HepG2 (cell line): ENCODE measurements at regions of chr1 and their contacts with region 1.

Region 1: DNA sequence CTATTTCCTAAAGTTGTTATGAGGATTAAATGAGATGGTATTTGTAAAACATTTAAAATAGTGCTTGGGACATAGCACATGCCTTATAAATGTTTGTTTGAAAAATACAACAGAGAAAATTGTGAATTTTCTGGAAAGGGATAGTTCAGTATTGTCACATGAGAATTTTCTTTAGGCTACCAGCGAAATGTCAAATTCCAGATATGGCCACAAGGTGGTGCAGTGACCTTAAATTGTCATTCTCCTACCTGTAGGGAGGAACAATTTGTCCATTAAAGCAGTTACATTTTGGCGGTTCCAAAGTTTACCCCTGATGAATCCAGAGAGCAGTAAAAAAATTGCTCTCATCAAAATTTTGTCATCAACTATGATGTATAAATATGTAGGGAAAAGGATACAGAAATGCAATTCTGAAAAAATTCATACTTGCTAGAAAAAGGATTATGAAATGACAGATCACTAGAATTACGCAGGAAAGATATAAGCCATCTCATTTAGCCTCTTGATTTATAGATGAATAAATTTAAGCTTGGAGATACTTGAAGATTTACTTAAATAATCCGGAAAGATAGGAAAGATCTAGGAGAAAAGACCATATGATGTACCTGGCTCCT is 50.2 kb upstream of the TSHB start:
- DNase-seq: peak; percentile 45
- ATAC-seq: 0 out of 3 replicates have a peak, but pooled peaks have one; percentile 27
- H3K4me3 ChIP-seq: no peak overlapping the region
- H3K27ac ChIP-seq: no peak overlapping the region
- H3K4me1 ChIP-seq: no peaks in the 10 kb centered on the region
- H3K27me3 ChIP-seq: no peaks in the 10 kb centered on the region
- CTCF ChIP-seq: peak; percentile 79
- EP300 ChIP-seq: no peak
- POLR2A ChIP-seq: no peak
- RAD21 ChIP-seq: peak; percentile 48; the same call in 1 of the 2 replicates

Region 2: DNA sequence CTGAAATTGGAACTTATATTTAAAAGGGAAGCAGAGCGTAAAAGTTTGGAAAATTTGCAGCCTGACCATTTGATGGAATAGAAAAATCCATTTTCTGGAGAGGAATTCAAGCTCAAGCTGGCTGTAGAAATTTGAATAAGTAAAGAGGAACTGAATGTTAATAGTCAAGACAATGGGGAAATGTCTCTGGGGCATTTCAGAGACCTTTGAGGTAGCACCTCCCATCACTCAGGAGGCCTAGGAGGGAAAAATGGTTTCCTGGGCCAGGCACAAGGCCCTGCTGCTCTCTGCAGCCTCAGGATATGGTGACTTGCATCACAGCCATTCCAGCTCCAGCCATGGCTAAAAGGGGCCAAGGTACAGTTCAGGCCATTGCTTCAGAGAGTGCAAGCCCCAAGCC is 32.6 kb after region 1 on chr1:
- CTCF ChIA-PET with region 1: no interaction called
- POLR2A ChIA-PET with region 1: no interaction called
- in situ Hi-C with region 1: no loop called
- intact Hi-C with region 1: no loop called
- DNase-seq: no peak
- ATAC-seq: no peak
- H3K4me3 ChIP-seq: no peak overlapping the region
- H3K27ac ChIP-seq: no peak overlapping the region
- H3K4me1 ChIP-seq: no peaks in the 10 kb centered on the region
- H3K27me3 ChIP-seq: no peaks in the 10 kb centered on the region; a peak in 1 of 5 replicates
- CTCF ChIP-seq: no peak
- EP300 ChIP-seq: no peak
- POLR2A ChIP-seq: no peak
- RAD21 ChIP-seq: no peak

Region 3: GRCh38 chr1:115041654-115042053 is 62.3 kb after region 1 on chr1:
- CTCF ChIA-PET with region 1: interaction called, 37 read pairs
- POLR2A ChIA-PET with region 1: no interaction called
- in situ Hi-C with region 1: loop called (anchors 5 kb)
- intact Hi-C with region 1: loop called (anchors 1 kb)
- DNase-seq: peak; percentile 59
- ATAC-seq: peak; percentile 81
- H3K4me3 ChIP-seq: no peak overlapping the region
- H3K27ac ChIP-seq: no peak overlapping the region
- H3K4me1 ChIP-seq: peaks cover 20% of the 10 kb centered on the region
- H3K27me3 ChIP-seq: no peaks in the 10 kb centered on the region
- CTCF ChIP-seq: peak; percentile 76
- EP300 ChIP-seq: no peak
- POLR2A ChIP-seq: no peak
- RAD21 ChIP-seq: peak; percentile 53

Region 4: GRCh38 chr1:115052454-115053083 is 73.2 kb after region 1 on chr1:
- CTCF ChIA-PET with region 1: interaction called, 17 read pairs
- POLR2A ChIA-PET with region 1: no interaction called
- in situ Hi-C with region 1: no loop called
- intact Hi-C with region 1: loop called (anchors 2 kb)
- DNase-seq: peak; percentile 57
- ATAC-seq: peak; percentile 94
- H3K4me3 ChIP-seq: no peak overlapping the region
- H3K27ac ChIP-seq: no peak overlapping the region
- H3K4me1 ChIP-seq: no peaks in the 10 kb centered on the region
- H3K27me3 ChIP-seq: peaks cover 0 to 11% of the 10 kb centered on the region in 2 experiments; a peak in 1 of 5 replicates
- CTCF ChIP-seq: peak; percentile 81
- EP300 ChIP-seq: no peak
- POLR2A ChIP-seq: no peak
- RAD21 ChIP-seq: no peak

Region 5: DNA sequence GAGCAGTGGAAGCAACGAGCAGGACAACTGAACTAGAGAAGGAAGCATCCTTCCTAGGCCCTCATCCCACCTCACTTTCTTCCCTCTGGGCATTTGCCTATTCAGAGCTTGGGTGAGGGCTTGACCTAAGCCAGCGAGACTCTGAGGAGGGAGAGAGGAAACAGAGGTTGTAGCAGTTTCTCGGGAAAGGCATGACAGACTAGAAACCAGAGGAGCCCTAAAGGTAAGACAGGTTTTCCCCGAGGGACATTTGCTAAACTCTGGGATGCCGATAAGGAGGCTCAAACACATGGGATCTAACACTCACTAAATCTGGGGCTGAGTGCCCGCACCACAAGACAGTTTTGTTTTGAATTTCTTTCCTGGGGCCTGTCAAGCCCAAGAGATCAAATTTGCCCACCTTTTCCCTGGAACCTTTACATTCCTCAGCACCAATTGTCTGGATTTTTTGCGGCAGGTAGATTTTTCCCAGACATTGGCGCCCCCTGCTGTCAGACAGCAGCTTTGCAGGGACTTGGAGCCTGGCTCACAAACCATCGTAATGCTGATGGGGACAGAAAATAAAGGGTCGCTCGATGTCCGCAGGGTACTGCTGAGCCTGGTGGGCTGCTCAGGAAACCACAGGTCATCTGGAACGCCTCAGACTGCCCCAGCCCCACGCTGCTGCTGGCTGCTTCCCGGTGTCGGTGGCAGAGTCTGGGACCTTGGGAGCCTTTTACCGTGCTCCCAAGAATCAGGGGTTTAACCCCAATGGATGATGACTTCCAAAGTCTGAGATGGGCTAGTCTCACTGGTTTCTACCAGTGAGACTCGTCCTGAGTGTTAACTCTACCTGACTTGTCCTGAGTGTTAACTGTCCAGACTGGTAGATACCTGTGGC is 133.4 kb after region 1 on chr1:
- CTCF ChIA-PET with region 1: interaction called, 16 read pairs
- POLR2A ChIA-PET with region 1: no interaction called
- in situ Hi-C with region 1: no loop called
- intact Hi-C with region 1: loop called (anchors 1 kb)
- DNase-seq: no peak
- ATAC-seq: peak; percentile 70
- H3K4me3 ChIP-seq: no peak overlapping the region
- H3K27ac ChIP-seq: no peak overlapping the region
- H3K4me1 ChIP-seq: no peaks in the 10 kb centered on the region
- H3K27me3 ChIP-seq: peaks cover 0 to 1% of the 10 kb centered on the region in 2 experiments; a peak in 1 of 5 replicates
- CTCF ChIP-seq: peak; percentile 80
- EP300 ChIP-seq: no peak
- POLR2A ChIP-seq: no peak
- RAD21 ChIP-seq: peak; percentile 36